MCF 10A (cell line): ENCODE measurements at regions of chr7 and their contacts with region 1.

Region 1: GRCh38 chr7:106461993-106462859 is 177.4 kb upstream of the NAMPT start:
- DNase-seq: peak; percentile 61
- H3K4me3 Mint-ChIP-seq: no peak overlapping the region
- H3K27ac Mint-ChIP-seq: no peak overlapping the region
- H3K4me1 Mint-ChIP-seq: no peaks in the 10 kb centered on the region
- H3K27me3 Mint-ChIP-seq: no peaks in the 10 kb centered on the region
- CTCF ChIP-seq: peak; percentile 55

Region 2: DNA sequence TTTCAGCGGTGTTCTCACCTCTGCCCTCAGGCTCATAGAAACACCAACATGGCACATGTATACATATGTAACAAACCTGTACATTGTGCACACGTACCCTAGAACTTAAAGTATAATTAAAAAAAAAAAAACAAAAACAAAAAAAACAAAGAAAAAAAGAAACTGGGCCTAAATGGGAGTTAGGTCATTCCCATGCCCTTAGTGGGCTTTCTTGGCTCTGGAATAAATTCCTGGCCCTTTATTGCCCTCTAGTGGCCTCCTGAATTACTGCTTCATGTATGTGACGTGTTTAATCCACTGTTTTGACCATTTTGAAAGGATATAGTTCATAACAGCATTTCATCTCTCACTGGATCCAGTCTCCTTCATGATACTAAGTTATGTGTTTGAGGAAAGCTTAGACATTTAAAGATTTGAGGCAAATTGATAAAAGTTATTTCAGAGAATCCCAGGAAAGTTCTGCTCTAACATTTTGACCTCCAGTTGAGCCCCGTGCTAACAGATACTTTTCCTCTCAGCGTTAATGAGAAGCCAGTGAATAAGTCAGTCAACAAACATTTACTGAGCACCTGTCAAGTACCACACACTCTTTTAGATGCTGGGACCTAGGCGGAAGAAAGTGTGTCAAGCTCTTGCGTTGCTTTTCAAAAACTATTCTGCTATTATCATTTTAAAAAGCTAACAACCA is 295.4 kb before region 1 on chr7:
- CTCF ChIA-PET with region 1: interaction called, 42 read pairs
- POLR2A ChIA-PET with region 1: no interaction called
- intact Hi-C with region 1: no loop called
- DNase-seq: peak; percentile 83
- H3K4me3 Mint-ChIP-seq: no peak overlapping the region
- H3K27ac Mint-ChIP-seq: no peak overlapping the region
- H3K4me1 Mint-ChIP-seq: no peaks in the 10 kb centered on the region
- H3K27me3 Mint-ChIP-seq: no peaks in the 10 kb centered on the region
- CTCF ChIP-seq: peak; percentile 77

Region 3: DNA sequence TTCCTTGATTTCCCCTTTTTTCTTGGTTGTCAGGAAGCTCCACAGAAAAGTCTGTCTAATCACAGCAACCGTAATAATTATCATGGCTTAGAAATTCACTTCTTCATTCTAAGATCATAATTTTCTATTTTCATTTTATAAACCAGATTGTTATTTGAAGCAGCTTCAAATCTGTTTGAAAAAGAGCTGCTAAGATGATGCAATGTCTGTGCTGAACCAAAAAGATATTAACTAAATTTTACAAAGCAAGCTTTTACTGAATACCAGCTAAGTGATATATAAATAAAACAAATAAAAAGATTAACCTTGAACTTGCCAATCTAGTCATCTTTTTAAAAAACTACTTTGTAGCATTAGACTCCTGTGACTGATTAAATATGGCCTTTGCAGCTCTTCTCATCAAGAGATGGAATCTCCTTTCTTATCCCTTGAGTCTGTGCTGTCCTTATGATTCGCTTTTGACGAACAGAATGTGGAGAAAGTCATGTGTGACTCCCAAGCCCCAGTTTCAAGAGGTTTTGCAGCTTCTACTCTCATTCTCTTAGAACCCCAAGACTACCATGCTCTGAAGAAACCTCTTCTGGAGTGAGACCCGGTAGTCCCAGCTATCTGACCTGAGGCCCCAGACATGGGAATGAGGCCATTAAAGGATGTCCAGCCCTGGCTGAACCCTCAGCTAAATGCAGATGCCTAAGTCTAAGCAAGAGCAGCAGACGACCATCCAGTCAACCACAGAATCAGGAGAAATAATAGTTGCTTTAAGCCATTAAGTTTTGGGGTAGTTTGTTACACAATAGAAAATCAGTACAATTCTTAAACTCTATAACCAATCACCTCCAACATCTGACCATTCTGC is 191.9 kb before region 1 on chr7:
- CTCF ChIA-PET with region 1: interaction called, 18 read pairs
- POLR2A ChIA-PET with region 1: no interaction called
- intact Hi-C with region 1: no loop called
- DNase-seq: no peak
- H3K4me3 Mint-ChIP-seq: no peak overlapping the region
- H3K27ac Mint-ChIP-seq: peak overlapping the region; percentile 74
- H3K4me1 Mint-ChIP-seq: peaks cover 12% of the 10 kb centered on the region
- H3K27me3 Mint-ChIP-seq: no peaks in the 10 kb centered on the region
- CTCF ChIP-seq: no peak

Region 4: DNA sequence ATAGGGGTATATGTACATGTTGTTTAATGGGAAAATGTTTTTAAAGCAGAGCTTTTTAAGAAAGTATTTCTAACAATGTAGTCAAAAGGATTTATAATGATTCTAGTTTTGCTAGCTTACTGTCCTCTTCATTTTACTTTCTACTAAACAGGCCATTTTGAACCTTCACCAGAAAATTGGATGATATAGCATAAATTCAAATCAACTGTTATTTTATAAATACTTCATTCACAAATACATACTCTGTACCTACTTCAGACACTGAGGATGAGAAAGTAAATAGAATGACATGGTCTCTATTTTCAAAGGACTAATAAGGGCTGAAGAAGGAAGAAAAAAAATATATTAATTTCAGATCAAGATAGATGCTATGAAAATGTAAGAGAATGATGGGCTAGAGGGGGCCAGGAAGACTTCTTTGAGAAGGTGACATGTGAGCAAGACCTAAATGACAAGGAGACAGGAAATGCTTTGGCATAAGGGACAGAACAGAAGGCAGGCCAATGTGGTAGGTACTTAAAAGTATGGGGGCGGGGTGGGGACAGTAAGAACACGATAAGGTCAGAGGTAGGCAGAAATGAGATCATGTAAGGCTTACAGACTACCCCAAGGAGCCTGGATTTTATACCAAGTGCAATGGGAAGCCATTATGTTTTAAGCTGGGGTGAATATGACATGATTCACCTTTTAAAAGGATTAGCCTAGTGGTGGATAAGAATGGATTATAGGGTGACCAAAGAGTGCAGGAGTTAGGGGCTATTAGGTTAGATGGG is 182.6 kb before region 1 on chr7:
- CTCF ChIA-PET with region 1: interaction called, 13 read pairs
- POLR2A ChIA-PET with region 1: interaction called, 23 read pairs
- intact Hi-C with region 1: loop called (anchors 1 kb)
- DNase-seq: no peak
- H3K4me3 Mint-ChIP-seq: peak overlapping the region; percentile 100
- H3K27ac Mint-ChIP-seq: peak overlapping the region; percentile 28
- H3K4me1 Mint-ChIP-seq: peaks cover 29% of the 10 kb centered on the region
- H3K27me3 Mint-ChIP-seq: no peaks in the 10 kb centered on the region
- CTCF ChIP-seq: no peak

Region 5: GRCh38 chr7:106448992-106449859 is 13.0 kb before region 1 on chr7:
- CTCF ChIA-PET with region 1: interaction called, 34 read pairs
- POLR2A ChIA-PET with region 1: interaction called, 4 read pairs
- intact Hi-C with region 1: no loop called
- DNase-seq: no peak
- H3K4me3 Mint-ChIP-seq: no peak overlapping the region
- H3K27ac Mint-ChIP-seq: no peak overlapping the region
- H3K4me1 Mint-ChIP-seq: no peaks in the 10 kb centered on the region
- H3K27me3 Mint-ChIP-seq: no peaks in the 10 kb centered on the region
- CTCF ChIP-seq: no peak

Region 6: DNA sequence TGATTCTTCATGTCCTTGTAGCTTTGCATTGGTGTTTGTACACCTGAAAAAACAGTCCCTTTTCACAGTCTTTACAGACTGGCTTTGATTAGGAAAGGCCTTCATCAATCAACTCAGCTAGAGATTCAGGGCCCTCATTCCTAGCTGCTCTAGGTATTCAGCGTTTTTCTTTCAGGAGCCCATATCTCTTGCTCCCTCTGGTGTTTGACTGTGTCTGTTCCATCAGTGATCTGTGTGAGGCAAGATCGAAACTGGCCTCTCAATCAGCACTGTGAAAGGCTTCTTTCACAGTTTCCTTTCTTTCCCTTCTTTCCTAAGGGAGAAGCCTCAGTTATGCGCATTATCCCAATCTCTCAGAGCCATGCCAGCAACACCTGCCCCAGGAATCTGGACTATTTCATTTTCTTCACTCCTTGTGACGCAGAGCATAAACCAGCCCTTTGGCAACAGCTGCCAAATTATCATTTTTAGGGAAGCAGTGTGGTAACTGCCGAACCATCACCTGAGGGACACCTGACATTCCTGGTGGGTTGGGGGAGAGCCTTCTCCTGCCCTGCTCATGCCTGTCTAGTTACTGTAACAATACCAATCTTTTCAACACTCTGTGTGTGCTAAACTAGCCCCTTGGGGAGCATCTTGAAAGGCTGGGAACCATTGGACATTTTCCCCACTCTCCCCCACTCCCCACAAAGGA is 274.4 kb after region 1 on chr7:
- CTCF ChIA-PET with region 1: interaction called, 5 read pairs
- POLR2A ChIA-PET with region 1: interaction called, 3 read pairs
- intact Hi-C with region 1: loop called (anchors 2 kb)
- DNase-seq: peak; percentile 84
- H3K4me3 Mint-ChIP-seq: peak overlapping the region; percentile 57
- H3K27ac Mint-ChIP-seq: peak overlapping the region; percentile 86
- H3K4me1 Mint-ChIP-seq: peaks cover 9% of the 10 kb centered on the region
- H3K27me3 Mint-ChIP-seq: no peaks in the 10 kb centered on the region
- CTCF ChIP-seq: peak; percentile 72